ENCODE measurements at regions of chr9 and their contacts with region 1.

Region 1: GRCh38 chr9:120936011-120936763 is 9.6 kb upstream of the TRAF1 start:
- DNase-seq: peak; percentile 69 to 97 (median 92)

Region 2: DNA sequence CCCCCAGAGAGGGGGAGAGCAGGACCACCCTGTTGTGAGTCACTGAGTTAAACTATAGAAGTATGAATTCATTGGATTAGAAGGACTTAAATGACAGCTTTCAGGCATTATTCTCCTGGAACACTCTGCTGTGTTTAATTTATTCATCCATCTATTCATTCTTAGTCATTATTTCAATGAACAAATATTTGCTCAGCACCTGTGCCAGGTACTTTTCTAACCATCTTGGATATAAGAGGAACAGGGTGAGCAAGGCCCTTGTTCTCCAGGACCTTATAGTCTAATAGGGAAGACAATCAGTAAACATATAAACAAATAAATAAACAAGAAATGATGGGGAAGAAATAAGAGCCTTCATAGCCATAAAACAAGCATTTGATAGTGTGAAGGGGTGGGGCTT is 1083.1 kb before region 1 on chr9:
- intact Hi-C with region 1: no loop called
- DNase-seq: no peak

Region 3: DNA sequence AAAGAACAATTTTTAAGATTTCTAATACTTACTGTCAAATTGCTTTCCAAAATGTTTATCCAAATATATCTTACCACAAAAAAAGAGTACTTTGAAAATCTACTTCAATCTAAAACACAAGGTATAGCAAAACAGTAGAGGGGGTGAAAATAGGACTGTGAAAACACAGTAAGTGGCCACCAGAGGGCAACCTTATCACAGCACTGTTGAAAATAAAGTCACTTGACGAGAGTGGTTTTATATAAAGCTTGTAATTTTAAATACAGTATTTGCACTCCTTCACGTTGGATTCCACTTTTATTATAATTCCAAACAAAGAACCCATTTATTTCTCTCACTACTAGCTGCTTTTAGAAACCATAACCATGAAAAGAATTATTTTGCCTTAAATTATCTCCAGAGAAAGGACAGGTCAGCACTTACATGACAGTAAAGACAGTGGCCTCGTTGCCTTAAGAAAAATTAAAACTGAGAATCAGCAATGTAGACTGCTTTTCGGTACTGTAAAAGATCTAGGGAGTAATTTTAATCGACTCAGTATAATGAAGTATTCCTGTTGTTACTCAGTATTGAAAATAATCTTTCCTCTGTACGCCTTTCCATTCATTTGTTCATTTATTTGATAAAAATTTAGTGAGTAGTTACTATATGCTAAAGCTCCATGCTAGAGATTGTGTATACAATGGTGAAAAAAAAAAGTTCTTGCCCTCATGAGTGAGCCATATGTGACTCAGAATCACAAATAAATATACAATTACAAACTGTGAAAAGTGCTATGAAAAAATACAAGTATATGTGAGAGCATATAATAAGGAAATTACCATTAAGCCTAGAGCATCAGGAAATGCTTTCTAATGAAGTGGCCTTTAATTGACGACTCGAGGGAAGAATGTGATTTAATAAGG is 316.2 kb before region 1 on chr9:
- intact Hi-C with region 1: loop called (anchors 10 kb)
- DNase-seq: peak in 6 of 10 donors; percentile 36 to 86 (median 64)

Region 4: DNA sequence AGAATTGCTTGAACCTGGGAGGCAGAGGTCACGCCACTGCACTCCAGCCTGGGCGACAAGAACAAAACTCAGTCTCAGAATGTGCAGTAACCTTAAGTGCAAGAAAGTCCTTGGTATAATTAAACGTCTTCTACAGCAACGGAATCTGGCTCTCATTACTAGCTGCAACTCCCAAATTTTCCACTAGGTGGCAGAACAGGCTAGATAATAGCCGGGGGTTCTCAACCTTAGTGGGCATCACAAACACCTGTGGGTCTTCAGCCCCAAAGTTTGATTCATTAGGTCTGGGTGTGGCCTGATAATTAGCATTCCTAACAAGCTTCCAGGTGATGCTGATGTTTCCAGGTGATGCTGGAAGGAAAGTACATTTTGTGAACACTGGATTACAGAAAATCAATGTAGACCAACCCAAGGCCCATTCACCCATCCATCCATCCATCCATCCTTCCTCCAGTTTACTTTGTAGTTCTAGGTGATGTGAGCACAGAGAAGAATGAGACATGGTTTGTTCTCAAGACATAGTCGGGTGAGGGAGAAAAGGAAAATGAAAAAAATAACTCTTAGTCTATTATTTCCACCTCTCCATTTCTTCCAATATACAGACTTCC is 180.3 kb before region 1 on chr9:
- intact Hi-C with region 1: loop called (anchors 2 kb)
- DNase-seq: peak in 4 of 10 donors; percentile 53 to 63 (median 58)

Region 5: GRCh38 chr9:120792898-120793765 is 143.1 kb before region 1 on chr9 and contains the start of gene FBXW2:
- intact Hi-C with region 1: loop called (anchors 2 kb)
- DNase-seq: peak; percentile 87 to 99 (median 92)

Region 6: GRCh38 chr9:120875954-120876841 is 60.0 kb before region 1 on chr9:
- intact Hi-C with region 1: loop called (anchors 2 kb)
- DNase-seq: peak; percentile 49 to 96 (median 76)

Region 7: GRCh38 chr9:120913647-120914264 is 22.4 kb before region 1 on chr9:
- intact Hi-C with region 1: loop called (anchors 2 kb)
- DNase-seq: peak in 1 of 10 donors; percentile 35

Region 8: GRCh38 chr9:121059998-121060636 is 123.9 kb after region 1 on chr9:
- intact Hi-C with region 1: no loop called
- DNase-seq: peak in 1 of 10 donors; percentile 20